CD4-positive, alpha-beta memory T cell (primary cell): ENCODE measurements at regions of chr1 and their contacts with region 1.

Region 1: GRCh38 chr1:65419681-65420589 is 533 bp upstream of the LEPR start:
- DNase-seq: peak; percentile 97 to 99 (median 98)
- H3K4me3 ChIP-seq: peak overlapping the region; percentile 76 to 79
- H3K4me3 Mint-ChIP-seq: peak overlapping the region in 1 of 8 donors; percentile 94
- H3K27ac ChIP-seq: peak overlapping the region; percentile 82
- H3K27ac Mint-ChIP-seq: peak overlapping the region in 5 of 7 donors; percentile 91 to 96 (median 96)
- H3K4me1 ChIP-seq: peaks cover 38% of the 10 kb centered on the region
- H3K4me1 Mint-ChIP-seq: peaks cover 10 to 27% (median 17%) of the 10 kb centered on the region in 4 donors
- H3K27me3 ChIP-seq: no peaks in the 10 kb centered on the region
- H3K27me3 Mint-ChIP-seq: peaks cover 0 to 2% of the 10 kb centered on the region in 2 donors

Region 2: GRCh38 chr1:63522891-63523728 is 1896.8 kb before region 1 on chr1 and contains the starts of genes EFCAB7 and ITGB3BP:
- CTCF ChIA-PET with region 1: no interaction called
- POLR2A ChIA-PET with region 1: no interaction called
- intact Hi-C with region 1: loop called (anchors 2 kb)
- DNase-seq: peak; percentile 81 to 84 (median 81)
- H3K4me3 ChIP-seq: peak within 1 kb of the TSS; percentile 92 to 94
- H3K4me3 Mint-ChIP-seq: peak within 1 kb of the TSS; percentile 89 to 98 (median 93)
- H3K27ac ChIP-seq: peak within 1 kb of the TSS; percentile 79
- H3K27ac Mint-ChIP-seq: peak within 1 kb of the TSS; percentile 93 to 99 (median 97)
- H3K4me1 ChIP-seq: peaks cover 25% of the 10 kb centered on the region
- H3K4me1 Mint-ChIP-seq: peaks cover 7 to 50% (median 22%) of the 10 kb centered on the region in 4 donors
- H3K27me3 ChIP-seq: no peaks in the 10 kb centered on the region
- H3K27me3 Mint-ChIP-seq: no peaks in the 10 kb centered on the region
- total RNA-seq, gene EFCAB7: 9.8 to 15.1 TPM
- total RNA-seq, gene ITGB3BP: 26.4 to 27.8 TPM

Region 3: GRCh38 chr1:65067491-65068201 is 352.3 kb before region 1 on chr1:
- CTCF ChIA-PET with region 1: interaction called, 5 read pairs
- POLR2A ChIA-PET with region 1: interaction called, 5 read pairs
- intact Hi-C with region 1: loop called (anchors 1 kb)
- DNase-seq: peak; percentile 66 to 72 (median 69)
- H3K4me3 ChIP-seq: peak overlapping the region; percentile 84 to 97
- H3K4me3 Mint-ChIP-seq: peak overlapping the region; percentile 92 to 98 (median 96)
- H3K27ac ChIP-seq: peak overlapping the region; percentile 87
- H3K27ac Mint-ChIP-seq: peak overlapping the region; percentile 95 to 99 (median 98)
- H3K4me1 ChIP-seq: peaks cover 50% of the 10 kb centered on the region
- H3K4me1 Mint-ChIP-seq: peaks cover 39 to 66% (median 49%) of the 10 kb centered on the region in 4 donors
- H3K27me3 ChIP-seq: no peaks in the 10 kb centered on the region
- H3K27me3 Mint-ChIP-seq: no peaks in the 10 kb centered on the region

Region 4: GRCh38 chr1:65105596-65105995 is 314.3 kb before region 1 on chr1:
- CTCF ChIA-PET with region 1: no interaction called
- POLR2A ChIA-PET with region 1: no interaction called
- intact Hi-C with region 1: no loop called
- DNase-seq: no peak
- H3K4me3 ChIP-seq: no peak overlapping the region
- H3K4me3 Mint-ChIP-seq: no peak overlapping the region
- H3K27ac ChIP-seq: no peak overlapping the region
- H3K27ac Mint-ChIP-seq: no peak overlapping the region
- H3K4me1 ChIP-seq: no peaks in the 10 kb centered on the region
- H3K4me1 Mint-ChIP-seq: peaks cover 0 to 2% (median 0%) of the 10 kb centered on the region in 4 donors
- H3K27me3 ChIP-seq: no peaks in the 10 kb centered on the region
- H3K27me3 Mint-ChIP-seq: peaks cover 7 to 13% of the 10 kb centered on the region in 2 donors

Region 5: GRCh38 chr1:65254319-65255034 is 165.5 kb before region 1 on chr1:
- CTCF ChIA-PET with region 1: interaction called, 4 read pairs
- POLR2A ChIA-PET with region 1: interaction called, 20 read pairs
- intact Hi-C with region 1: loop called (anchors 1 kb)
- DNase-seq: peak; percentile 81 to 85 (median 83)
- H3K4me3 ChIP-seq: peak overlapping the region; percentile 45 to 68
- H3K4me3 Mint-ChIP-seq: peak overlapping the region; percentile 85 to 98 (median 94)
- H3K27ac ChIP-seq: no peak overlapping the region
- H3K27ac Mint-ChIP-seq: peak overlapping the region in 5 of 7 donors; percentile 72 to 94 (median 88)
- H3K4me1 ChIP-seq: peaks cover 20% of the 10 kb centered on the region
- H3K4me1 Mint-ChIP-seq: peaks cover 8 to 20% (median 16%) of the 10 kb centered on the region in 4 donors
- H3K27me3 ChIP-seq: no peaks in the 10 kb centered on the region
- H3K27me3 Mint-ChIP-seq: peaks cover 0 to 4% of the 10 kb centered on the region in 2 donors

Region 6: GRCh38 chr1:65362545-65362944 is 57.4 kb before region 1 on chr1:
- CTCF ChIA-PET with region 1: no interaction called
- POLR2A ChIA-PET with region 1: no interaction called
- intact Hi-C with region 1: no loop called
- DNase-seq: no peak
- H3K4me3 ChIP-seq: no peak overlapping the region
- H3K4me3 Mint-ChIP-seq: no peak overlapping the region
- H3K27ac ChIP-seq: no peak overlapping the region
- H3K27ac Mint-ChIP-seq: no peak overlapping the region
- H3K4me1 ChIP-seq: no peaks in the 10 kb centered on the region
- H3K4me1 Mint-ChIP-seq: no peaks in the 10 kb centered on the region
- H3K27me3 ChIP-seq: no peaks in the 10 kb centered on the region
- H3K27me3 Mint-ChIP-seq: no peaks in the 10 kb centered on the region

Region 7: GRCh38 chr1:65431111-65431705 is 11.3 kb after region 1 on chr1:
- CTCF ChIA-PET with region 1: interaction called, 23 read pairs
- POLR2A ChIA-PET with region 1: interaction called, 10 read pairs
- intact Hi-C with region 1: no loop called
- DNase-seq: peak in 4 of 5 donors; percentile 13 to 37 (median 20)
- H3K4me3 ChIP-seq: no peak overlapping the region
- H3K4me3 Mint-ChIP-seq: no peak overlapping the region
- H3K27ac ChIP-seq: no peak overlapping the region
- H3K27ac Mint-ChIP-seq: peak overlapping the region in 1 of 7 donors; percentile 47
- H3K4me1 ChIP-seq: peaks cover 3% of the 10 kb centered on the region
- H3K4me1 Mint-ChIP-seq: peaks cover 2 to 13% (median 7%) of the 10 kb centered on the region in 4 donors
- H3K27me3 ChIP-seq: no peaks in the 10 kb centered on the region
- H3K27me3 Mint-ChIP-seq: no peaks in the 10 kb centered on the region

Region 8: GRCh38 chr1:65478379-65479026 is 58.6 kb after region 1 on chr1:
- CTCF ChIA-PET with region 1: no interaction called
- POLR2A ChIA-PET with region 1: no interaction called
- intact Hi-C with region 1: no loop called
- DNase-seq: no peak
- H3K4me3 ChIP-seq: no peak overlapping the region
- H3K4me3 Mint-ChIP-seq: no peak overlapping the region
- H3K27ac ChIP-seq: no peak overlapping the region
- H3K27ac Mint-ChIP-seq: no peak overlapping the region
- H3K4me1 ChIP-seq: no peaks in the 10 kb centered on the region
- H3K4me1 Mint-ChIP-seq: no peaks in the 10 kb centered on the region
- H3K27me3 ChIP-seq: no peaks in the 10 kb centered on the region
- H3K27me3 Mint-ChIP-seq: no peaks in the 10 kb centered on the region